Adrenal gland (tissue), 19 donors: ENCODE measurements at regions of chr5 and their contacts with region 1.

Region 1: DNA sequence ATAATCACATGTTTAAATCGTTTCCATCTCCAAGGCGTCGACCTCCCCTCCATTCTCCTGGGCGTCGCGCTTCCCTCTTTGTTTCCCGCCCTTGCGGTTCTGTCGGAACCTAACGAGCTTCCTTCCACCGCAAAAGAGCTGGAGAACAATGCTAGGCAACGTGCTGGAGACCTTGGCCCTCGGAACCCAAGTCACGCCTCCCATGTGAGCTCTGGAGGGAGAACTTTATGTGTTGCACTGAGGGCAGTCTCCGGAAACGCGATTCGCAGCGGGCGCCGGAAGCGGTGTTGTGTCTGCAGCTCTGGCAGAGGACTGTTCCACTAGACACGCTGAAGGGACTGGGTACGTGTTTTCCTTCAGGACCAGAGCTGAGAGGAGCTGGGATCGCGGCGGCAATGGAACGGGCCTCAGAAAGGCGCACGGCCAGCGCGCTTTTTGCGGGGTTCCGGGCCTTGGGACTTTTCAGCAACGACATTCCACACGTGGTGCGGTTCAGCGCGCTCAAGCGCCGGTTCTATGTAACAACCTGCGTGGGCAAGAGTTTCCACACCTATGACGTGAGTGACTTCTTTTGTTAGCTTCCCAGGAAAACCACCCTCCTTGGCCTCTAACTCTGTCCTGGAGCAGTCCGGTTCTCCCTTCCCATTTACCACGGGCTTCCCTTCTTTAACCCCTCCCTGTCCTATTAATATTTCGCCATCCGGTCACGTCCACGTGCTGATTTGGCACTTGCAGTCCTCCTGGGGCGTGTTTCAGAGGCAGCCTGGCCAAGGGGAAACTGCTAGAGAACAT is at the start of gene WDR36:
- DNase-seq: peak; percentile 90 to 95 (median 92)
- H3K4me3 ChIP-seq: peak within 1 kb of the TSS; percentile 76 to 87 (median 80)
- H3K27ac ChIP-seq: peak within 1 kb of the TSS; percentile 40 to 91 (median 73)
- H3K4me1 ChIP-seq: peaks cover 11 to 28% of the 10 kb centered on the region in 2 donors
- H3K27me3 ChIP-seq: no peaks in the 10 kb centered on the region
- CTCF ChIP-seq: peak in 1 of 6 experiments; percentile 8
- POLR2A ChIP-seq: peak in 1 of 2 donors; percentile 39
- total RNA-seq, gene WDR36: 13.2 to 86.1 (median 23.6) TPM

Region 2: GRCh38 chr5:110757118-110757729 is 335.0 kb before region 1 on chr5:
- intact Hi-C with region 1: loop called in 1 of 2 experiments (anchors 10 kb)
- DNase-seq: peak in 3 of 7 donors; percentile 7 to 26 (median 14)
- H3K4me3 ChIP-seq: no peak overlapping the region
- H3K27ac ChIP-seq: no peak overlapping the region
- H3K4me1 ChIP-seq: no peaks in the 10 kb centered on the region
- H3K27me3 ChIP-seq: no peaks in the 10 kb centered on the region
- CTCF ChIP-seq: peak; percentile 49 to 77 (median 58)
- POLR2A ChIP-seq: no peak

Region 3: DNA sequence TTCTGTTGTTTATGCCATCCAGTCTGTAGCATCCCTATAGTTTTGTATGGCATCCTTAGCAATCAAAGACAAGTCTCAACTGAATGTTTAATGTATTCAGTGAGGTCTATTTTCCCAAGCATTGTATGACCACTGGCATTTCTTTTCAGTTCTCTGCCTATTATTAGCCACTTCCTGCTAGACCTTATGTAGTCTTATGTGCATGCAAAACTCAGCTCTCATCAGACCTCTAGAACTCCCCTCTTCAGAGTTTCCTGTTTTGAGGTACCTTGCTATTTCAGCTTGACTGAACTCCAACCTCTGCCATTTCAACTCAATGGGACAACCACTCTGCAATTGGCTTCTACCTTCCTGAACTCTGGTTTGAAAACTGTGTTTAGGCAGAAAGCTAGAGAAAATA is 240.2 kb before region 1 on chr5:
- intact Hi-C with region 1: no loop called
- DNase-seq: no peak
- H3K4me3 ChIP-seq: no peak overlapping the region
- H3K27ac ChIP-seq: no peak overlapping the region
- H3K4me1 ChIP-seq: no peaks in the 10 kb centered on the region
- H3K27me3 ChIP-seq: no peaks in the 10 kb centered on the region
- CTCF ChIP-seq: no peak
- POLR2A ChIP-seq: no peak

Region 4: DNA sequence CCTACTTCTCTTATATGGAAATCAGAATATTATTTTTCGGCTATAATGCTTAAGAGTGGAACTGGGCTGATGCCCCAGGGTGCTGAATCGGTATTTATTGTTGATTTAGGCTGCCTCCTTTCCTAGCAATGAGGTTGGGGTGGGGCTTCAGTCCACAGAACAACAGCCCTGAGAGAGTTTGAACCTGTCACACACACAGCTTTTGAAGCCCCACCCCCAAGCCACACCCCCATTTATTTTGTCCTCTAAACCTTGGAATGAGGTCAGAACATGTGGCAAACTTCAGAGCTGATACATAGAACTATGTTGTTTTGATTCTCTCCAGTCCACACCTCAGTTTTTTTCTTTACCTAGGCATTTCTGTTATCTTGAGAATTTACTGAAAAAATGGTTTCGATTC is 80.2 kb after region 1 on chr5:
- intact Hi-C with region 1: no loop called
- DNase-seq: no peak
- H3K4me3 ChIP-seq: no peak overlapping the region
- H3K27ac ChIP-seq: no peak overlapping the region
- H3K4me1 ChIP-seq: no peaks in the 10 kb centered on the region
- H3K27me3 ChIP-seq: no peaks in the 10 kb centered on the region
- CTCF ChIP-seq: no peak
- POLR2A ChIP-seq: no peak